ENCODE measurements at regions of chr2 and their contacts with region 1.

Region 1: DNA sequence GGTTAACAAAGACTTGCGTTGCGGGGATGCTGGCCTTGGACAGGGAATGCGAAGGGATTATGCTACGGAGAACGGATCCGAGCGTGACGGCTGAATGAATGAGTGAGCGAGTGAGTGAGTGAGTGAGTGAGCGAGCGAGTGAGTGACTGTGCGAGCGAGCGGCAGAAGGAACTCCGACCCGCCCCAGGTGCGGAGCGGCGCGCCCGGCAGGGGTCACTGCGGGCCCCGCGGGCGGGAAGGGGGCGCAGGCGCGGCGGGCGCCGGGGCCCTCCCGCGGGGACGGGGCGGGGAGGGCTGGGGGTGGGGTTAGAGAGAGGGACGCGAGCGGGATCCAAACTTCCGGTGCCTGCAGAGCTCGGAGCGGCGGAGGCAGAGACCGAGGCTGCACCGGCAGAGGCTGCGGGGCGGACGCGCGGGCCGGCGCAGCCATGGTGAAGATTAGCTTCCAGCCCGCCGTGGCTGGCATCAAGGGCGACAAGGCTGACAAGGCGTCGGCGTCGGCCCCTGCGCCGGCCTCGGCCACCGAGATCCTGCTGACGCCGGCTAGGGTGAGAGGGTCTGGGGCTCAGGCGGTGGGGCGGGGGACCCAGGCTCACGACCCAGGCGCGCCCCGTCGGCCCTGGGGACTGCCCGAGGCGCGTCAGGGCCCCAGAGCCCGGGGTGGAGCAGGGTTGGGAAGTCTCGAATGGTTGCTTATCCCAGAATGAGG is at the start of gene ITM2C:
- DNase-seq: peak; percentile 58 to 85 (median 76)
- ATAC-seq: peak; percentile 75 to 79
- H3K4me3 Mint-ChIP-seq: peak within 1 kb of the TSS; percentile 77 to 96 (median 92)
- H3K27ac Mint-ChIP-seq: peak within 1 kb of the TSS; percentile 67 to 96 (median 90)
- H3K4me1 Mint-ChIP-seq: peaks cover 27 to 73% (median 67%) of the 10 kb centered on the region in 4 donors
- H3K27me3 Mint-ChIP-seq: peaks cover 0 to 7% (median 0%) of the 10 kb centered on the region in 5 donors
- polyA plus RNA-seq, gene ITM2C: 35.4 to 56.7 (median 53.8) TPM

Region 2: GRCh38 chr2:230877732-230878598 is 13.2 kb after region 1 on chr2:
- POLR2A ChIA-PET with region 1: interaction called, 62 read pairs
- DNase-seq: peak in 9 of 10 donors; percentile 33 to 78 (median 66)
- ATAC-seq: peak; percentile 88 to 92
- H3K4me3 Mint-ChIP-seq: peak overlapping the region; percentile 52 to 80 (median 75)
- H3K27ac Mint-ChIP-seq: peak overlapping the region; percentile 87 to 97 (median 90)
- H3K4me1 Mint-ChIP-seq: peaks cover 18 to 63% (median 43%) of the 10 kb centered on the region in 4 donors
- H3K27me3 Mint-ChIP-seq: no peaks in the 10 kb centered on the region

Measured in naive thymus-derived CD8-positive, alpha-beta T cell (primary cell).